PC-3 (cell line): ENCODE measurements at regions of chr1 and their contacts with region 1.

Region 1: DNA sequence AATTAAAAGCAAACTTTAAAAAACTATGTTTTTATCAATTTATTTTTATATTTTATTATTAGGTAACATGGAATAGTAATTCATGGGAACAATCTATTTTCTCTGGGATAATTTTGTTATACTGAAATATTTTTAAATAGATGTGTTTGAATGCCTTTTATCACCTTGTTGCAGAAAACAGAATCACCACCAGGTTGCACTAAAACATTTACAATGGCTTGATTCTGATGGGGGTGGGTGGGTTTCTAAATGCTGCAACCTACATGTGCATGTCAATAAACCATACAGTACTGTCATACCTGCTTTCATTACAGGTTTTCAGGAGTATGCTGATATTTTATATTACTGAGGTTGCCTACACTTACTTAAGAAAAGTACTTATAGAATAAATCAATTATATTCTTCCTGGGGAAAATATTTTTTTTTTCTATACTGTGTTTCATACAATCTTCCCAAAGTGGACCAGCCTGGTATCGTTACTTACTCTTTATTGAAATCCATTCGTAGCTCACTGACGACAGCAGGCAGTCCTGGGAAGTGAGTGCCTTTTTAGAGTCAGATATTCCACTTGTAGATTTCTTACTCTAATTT is 132.8 kb downstream of the PTPRC start:
- DNase-seq: peak; percentile 55
- ATAC-seq: no peak
- H3K4me3 ChIP-seq: no peak overlapping the region
- H3K27ac ChIP-seq: no peak overlapping the region
- H3K4me1 ChIP-seq: peaks cover 13% of the 10 kb centered on the region
- H3K27me3 ChIP-seq: no peaks in the 10 kb centered on the region
- CTCF ChIP-seq: peak; percentile 71

Region 2: GRCh38 chr1:198713081-198713480 is 58.6 kb before region 1 on chr1:
- CTCF ChIA-PET with region 1: no interaction called
- POLR2A ChIA-PET with region 1: interaction called, 19 read pairs
- intact Hi-C with region 1: no loop called
- DNase-seq: peak; percentile 61
- ATAC-seq: peak; percentile 76
- H3K4me3 ChIP-seq: no peak overlapping the region
- H3K27ac ChIP-seq: peak overlapping the region; percentile 12; the same call in 1 of the 2 replicates
- H3K4me1 ChIP-seq: peaks cover 26% of the 10 kb centered on the region
- H3K27me3 ChIP-seq: no peaks in the 10 kb centered on the region
- CTCF ChIP-seq: no peak

Region 3: DNA sequence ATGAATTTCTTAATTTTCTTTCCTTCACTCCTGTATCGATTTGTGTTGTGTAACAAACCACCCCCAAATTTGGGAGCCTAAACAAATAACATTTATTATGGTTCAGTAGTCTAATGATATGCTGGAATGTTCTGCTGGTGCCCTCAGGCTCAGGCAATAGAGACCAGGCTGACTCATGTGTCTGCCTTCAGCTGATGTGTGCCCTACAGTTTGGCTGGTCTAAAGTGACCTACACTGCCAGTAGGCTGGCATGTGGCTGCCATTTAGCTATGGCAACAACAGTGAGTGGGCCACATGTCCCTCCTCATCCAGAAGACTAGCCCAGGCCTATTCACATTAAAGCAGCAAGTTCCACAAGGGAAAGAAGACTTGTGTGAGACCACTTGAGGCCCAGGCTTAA is 17.0 kb before region 1 on chr1:
- CTCF ChIA-PET with region 1: no interaction called
- POLR2A ChIA-PET with region 1: no interaction called
- intact Hi-C with region 1: no loop called
- DNase-seq: no peak
- ATAC-seq: no peak
- H3K4me3 ChIP-seq: no peak overlapping the region
- H3K27ac ChIP-seq: no peak overlapping the region
- H3K4me1 ChIP-seq: no peaks in the 10 kb centered on the region
- H3K27me3 ChIP-seq: no peaks in the 10 kb centered on the region
- CTCF ChIP-seq: no peak

Region 4: DNA sequence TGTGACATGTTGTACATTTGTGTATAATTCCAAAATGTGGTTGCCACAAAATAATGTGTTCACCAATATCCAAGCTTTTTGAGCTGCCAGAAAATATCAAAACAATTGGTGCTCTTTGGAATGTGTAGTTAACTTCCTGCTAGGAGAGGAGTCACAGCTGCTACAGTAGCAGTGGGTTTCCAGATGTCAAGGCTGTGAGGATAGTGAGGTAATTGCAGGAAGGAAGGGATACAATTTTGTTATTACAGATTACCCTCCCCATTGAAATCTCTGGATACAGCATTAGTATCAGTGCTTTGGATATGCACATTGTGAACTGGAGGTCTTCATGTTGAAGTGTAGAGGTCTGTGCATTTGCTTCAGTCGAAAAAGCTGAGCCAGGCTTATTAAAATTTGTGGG is 120.4 kb after region 1 on chr1:
- CTCF ChIA-PET with region 1: no interaction called
- POLR2A ChIA-PET with region 1: no interaction called
- intact Hi-C with region 1: loop called (anchors 10 kb)
- DNase-seq: peak; percentile 19
- ATAC-seq: peak; percentile 55
- H3K4me3 ChIP-seq: no peak overlapping the region
- H3K27ac ChIP-seq: no peak overlapping the region
- H3K4me1 ChIP-seq: peaks cover 15% of the 10 kb centered on the region
- H3K27me3 ChIP-seq: no peaks in the 10 kb centered on the region
- CTCF ChIP-seq: no peak

Region 5: GRCh38 chr1:199041173-199041914 is 269.7 kb after region 1 on chr1:
- CTCF ChIA-PET with region 1: no interaction called
- POLR2A ChIA-PET with region 1: no interaction called
- intact Hi-C with region 1: loop called (anchors 10 kb)
- DNase-seq: no peak
- ATAC-seq: no peak
- H3K4me3 ChIP-seq: no peak overlapping the region
- H3K27ac ChIP-seq: no peak overlapping the region
- H3K4me1 ChIP-seq: no peaks in the 10 kb centered on the region
- H3K27me3 ChIP-seq: no peaks in the 10 kb centered on the region
- CTCF ChIP-seq: no peak

Region 6: GRCh38 chr1:199243423-199244061 is 471.9 kb after region 1 on chr1:
- CTCF ChIA-PET with region 1: no interaction called
- POLR2A ChIA-PET with region 1: no interaction called
- intact Hi-C with region 1: loop called (anchors 5 kb)
- DNase-seq: peak; percentile 70
- ATAC-seq: peak; percentile 93
- H3K4me3 ChIP-seq: no peak overlapping the region; the same call in 1 of the 2 replicates
- H3K27ac ChIP-seq: no peak overlapping the region
- H3K4me1 ChIP-seq: no peaks in the 10 kb centered on the region
- H3K27me3 ChIP-seq: no peaks in the 10 kb centered on the region
- CTCF ChIP-seq: peak; percentile 71

Region 7: GRCh38 chr1:199260801-199261200 is 489.1 kb after region 1 on chr1:
- CTCF ChIA-PET with region 1: no interaction called
- POLR2A ChIA-PET with region 1: no interaction called
- intact Hi-C with region 1: no loop called
- DNase-seq: no peak
- ATAC-seq: no peak
- H3K4me3 ChIP-seq: no peak overlapping the region
- H3K27ac ChIP-seq: no peak overlapping the region
- H3K4me1 ChIP-seq: no peaks in the 10 kb centered on the region
- H3K27me3 ChIP-seq: no peaks in the 10 kb centered on the region
- CTCF ChIP-seq: no peak

Region 8: DNA sequence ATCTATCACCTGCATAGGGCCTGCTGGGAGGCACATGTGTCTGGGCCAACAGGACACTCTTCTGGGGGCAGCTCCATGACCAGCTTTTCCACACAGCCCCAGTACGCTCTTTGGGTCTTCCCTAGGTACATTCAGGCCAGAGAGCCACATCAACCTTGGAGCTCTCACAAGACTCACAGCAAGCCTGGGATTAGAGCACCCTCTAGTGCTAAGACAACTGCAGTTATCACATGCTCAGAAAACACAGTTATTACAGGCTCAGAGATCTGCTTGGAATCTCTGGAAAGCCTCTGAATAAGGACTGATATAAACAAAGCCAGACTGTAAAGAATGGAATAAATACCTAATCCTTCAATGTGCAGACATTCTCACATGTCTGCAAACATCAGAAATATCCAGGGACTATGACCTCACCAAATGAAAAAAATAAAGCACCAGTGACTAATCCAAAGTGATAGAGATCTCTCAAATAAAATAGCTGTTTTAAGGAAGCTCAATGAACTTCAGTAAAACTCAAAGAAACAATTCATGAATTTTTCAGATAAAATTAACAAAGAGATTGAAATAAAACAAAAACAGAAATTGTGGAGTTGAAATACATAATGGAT is 692.0 kb after region 1 on chr1:
- CTCF ChIA-PET with region 1: no interaction called
- POLR2A ChIA-PET with region 1: no interaction called
- intact Hi-C with region 1: loop called (anchors 5 kb)
- DNase-seq: peak; percentile 67
- ATAC-seq: peak; percentile 62
- H3K4me3 ChIP-seq: no peak overlapping the region
- H3K27ac ChIP-seq: no peak overlapping the region
- H3K4me1 ChIP-seq: no peaks in the 10 kb centered on the region
- H3K27me3 ChIP-seq: no peaks in the 10 kb centered on the region
- CTCF ChIP-seq: peak; percentile 74